ENCODE measurements at regions of chr7 and their contacts with region 1.

Region 1: DNA sequence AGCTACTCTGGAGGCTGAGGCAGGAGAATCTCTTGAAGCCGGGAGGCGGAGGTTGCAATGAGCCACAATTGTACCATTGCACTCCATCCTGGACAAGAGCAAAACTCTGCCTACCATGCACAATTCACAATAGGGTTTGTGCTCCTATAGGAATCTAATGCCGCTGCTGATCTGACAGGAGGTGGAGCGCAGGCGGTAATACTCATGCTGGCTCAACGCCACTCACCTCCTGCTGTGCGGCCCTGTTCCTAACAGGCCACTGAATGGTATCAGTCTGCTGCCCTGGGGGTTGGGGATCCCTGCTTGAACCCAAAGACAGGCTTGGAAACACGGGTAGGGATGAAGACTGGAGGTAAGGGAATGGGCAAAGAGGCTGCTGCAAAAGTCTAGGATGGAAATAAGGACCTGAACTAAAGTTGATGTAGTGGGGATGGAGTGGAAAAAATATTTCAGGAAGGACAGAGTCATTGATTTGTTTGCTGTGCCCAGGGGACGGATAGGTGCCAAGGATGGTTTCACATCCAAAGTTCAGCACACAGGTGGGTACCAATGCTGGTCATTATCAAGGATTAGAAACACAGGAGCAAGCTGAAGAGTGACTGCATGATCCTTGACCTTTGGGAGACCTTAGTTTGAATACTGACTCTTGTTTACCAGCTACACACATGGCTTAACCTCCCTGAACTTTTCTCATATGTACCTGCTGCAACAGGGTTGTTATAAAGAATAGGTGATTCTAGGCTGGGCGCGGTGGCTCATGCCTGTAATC is 2.2 kb downstream of the MRPS17 start:
- DNase-seq: no peak
- ATAC-seq: no peak
- H3K4me3 Mint-ChIP-seq: peak overlapping the region; percentile 93
- H3K27ac Mint-ChIP-seq: peak overlapping the region; percentile 35
- H3K4me1 Mint-ChIP-seq: peaks cover 17% of the 10 kb centered on the region
- H3K27me3 Mint-ChIP-seq: no peaks in the 10 kb centered on the region
- CTCF ChIP-seq: no peak

Region 2: GRCh38 chr7:55878691-55879090 is 75.2 kb before region 1 on chr7:
- CTCF ChIA-PET with region 1: no interaction called
- POLR2A ChIA-PET with region 1: no interaction called
- intact Hi-C with region 1: no loop called
- DNase-seq: no peak
- ATAC-seq: no peak
- H3K4me3 Mint-ChIP-seq: no peak overlapping the region
- H3K27ac Mint-ChIP-seq: no peak overlapping the region
- H3K4me1 Mint-ChIP-seq: peaks cover 2% of the 10 kb centered on the region
- H3K27me3 Mint-ChIP-seq: no peaks in the 10 kb centered on the region
- CTCF ChIP-seq: no peak

Region 3: GRCh38 chr7:55964261-55965099 is 10.6 kb after region 1 on chr7 and contains the start of gene NIPSNAP2:
- CTCF ChIA-PET with region 1: interaction called, 12 read pairs
- POLR2A ChIA-PET with region 1: interaction called, 3 read pairs
- intact Hi-C with region 1: no loop called
- DNase-seq: peak; percentile 53
- ATAC-seq: peak; percentile 94
- H3K4me3 Mint-ChIP-seq: peak within 1 kb of the TSS; percentile 85
- H3K27ac Mint-ChIP-seq: peak within 1 kb of the TSS; percentile 88
- H3K4me1 Mint-ChIP-seq: peaks cover 34% of the 10 kb centered on the region
- H3K27me3 Mint-ChIP-seq: no peaks in the 10 kb centered on the region
- CTCF ChIP-seq: peak; percentile 22
- total RNA-seq, gene NIPSNAP2: 54.2 to 56.7 TPM

Region 4: DNA sequence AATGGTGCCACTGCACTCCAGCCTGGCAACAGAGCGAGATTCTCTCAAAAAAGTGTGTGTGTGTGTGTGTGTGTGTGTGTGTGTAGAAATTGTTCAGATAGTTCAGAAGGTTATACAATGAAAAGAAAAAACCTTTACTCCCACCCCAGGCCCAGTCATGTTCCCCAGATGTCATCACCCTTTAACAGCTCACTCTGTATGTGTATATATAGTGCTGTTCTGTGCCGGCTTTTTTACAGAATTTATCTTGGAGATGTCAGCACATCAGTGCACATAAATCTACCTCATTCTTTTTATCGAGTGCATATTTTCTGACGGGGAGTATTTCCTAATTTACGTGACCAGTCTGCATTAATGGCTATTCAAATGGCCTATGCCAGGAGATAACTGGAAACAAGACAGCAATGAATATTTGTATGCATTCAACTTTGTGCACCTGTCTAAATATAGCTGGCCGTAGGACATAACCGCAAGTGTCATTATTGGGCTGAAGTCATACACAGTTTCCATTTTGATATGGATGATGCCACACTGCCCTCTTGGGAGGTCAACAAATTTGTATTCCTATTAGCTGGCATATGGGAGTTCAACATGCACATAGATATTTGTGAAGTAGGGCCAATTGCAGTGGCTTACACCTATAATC is 22.2 kb after region 1 on chr7:
- CTCF ChIA-PET with region 1: no interaction called
- POLR2A ChIA-PET with region 1: no interaction called
- intact Hi-C with region 1: no loop called
- DNase-seq: no peak
- ATAC-seq: no peak
- H3K4me3 Mint-ChIP-seq: no peak overlapping the region
- H3K27ac Mint-ChIP-seq: no peak overlapping the region
- H3K4me1 Mint-ChIP-seq: peaks cover 11% of the 10 kb centered on the region
- H3K27me3 Mint-ChIP-seq: no peaks in the 10 kb centered on the region
- CTCF ChIP-seq: no peak

Measured in activated CD8-positive, alpha-beta T cell treated with anti-CD3 and anti-CD28 coated beads for 36 hours (primary cell).